Vagina (tissue), 2 donors: ENCODE measurements at regions of chr17 and their contacts with region 1.

Region 1: DNA sequence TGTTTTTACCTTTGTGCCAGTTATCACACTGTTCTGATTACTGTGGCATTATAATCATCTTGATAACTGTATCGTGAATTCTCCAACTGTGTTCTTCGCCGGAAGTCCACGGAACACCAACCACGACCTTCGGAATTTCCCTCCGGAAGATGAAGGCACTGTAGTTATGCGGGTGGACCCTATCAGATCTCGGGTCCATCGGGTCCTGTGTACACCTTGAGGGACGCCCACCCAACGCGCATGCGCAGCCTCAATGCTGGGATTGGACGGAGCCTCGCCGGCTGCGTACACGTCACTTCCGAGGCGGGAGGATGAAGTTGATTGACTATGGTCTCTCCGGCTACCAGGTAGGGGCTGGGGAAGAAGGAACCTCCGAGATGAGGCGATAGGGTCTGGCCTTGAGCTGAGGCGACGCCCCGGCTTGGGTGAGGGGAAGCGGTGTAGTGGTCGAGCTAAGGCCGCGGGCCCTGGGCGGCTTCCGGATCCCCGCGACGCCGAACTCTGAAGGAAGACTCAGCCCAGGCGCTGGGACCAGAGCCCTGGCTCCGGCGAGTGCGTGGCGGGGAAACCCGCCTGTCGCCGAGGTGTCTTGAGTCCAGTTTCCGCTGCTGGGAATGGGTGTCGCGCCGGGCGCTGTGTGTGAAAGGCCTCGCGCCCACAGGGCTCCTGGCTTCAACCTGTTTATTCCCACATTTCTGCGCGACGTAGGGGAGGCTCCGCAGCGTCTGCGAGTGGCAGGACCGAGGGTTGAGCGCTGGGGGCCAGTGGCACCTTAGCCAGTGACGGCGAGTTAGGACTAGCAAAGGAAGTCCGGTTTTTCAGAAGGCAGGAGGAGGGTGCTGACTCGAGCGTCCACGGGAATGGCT is at the start of gene DHRS7B:
- DNase-seq: peak; percentile 96 to 98
- H3K4me3 ChIP-seq: peak within 1 kb of the TSS; percentile 62 to 98
- H3K27ac ChIP-seq: peak within 1 kb of the TSS; percentile 93
- H3K4me1 ChIP-seq: peaks cover 17% of the 10 kb centered on the region
- H3K27me3 ChIP-seq: no peaks in the 10 kb centered on the region
- CTCF ChIP-seq: no peak
- POLR2A ChIP-seq: peak in 1 of 2 donors; percentile 55
- total RNA-seq, gene DHRS7B: 31.7 TPM

Region 2: DNA sequence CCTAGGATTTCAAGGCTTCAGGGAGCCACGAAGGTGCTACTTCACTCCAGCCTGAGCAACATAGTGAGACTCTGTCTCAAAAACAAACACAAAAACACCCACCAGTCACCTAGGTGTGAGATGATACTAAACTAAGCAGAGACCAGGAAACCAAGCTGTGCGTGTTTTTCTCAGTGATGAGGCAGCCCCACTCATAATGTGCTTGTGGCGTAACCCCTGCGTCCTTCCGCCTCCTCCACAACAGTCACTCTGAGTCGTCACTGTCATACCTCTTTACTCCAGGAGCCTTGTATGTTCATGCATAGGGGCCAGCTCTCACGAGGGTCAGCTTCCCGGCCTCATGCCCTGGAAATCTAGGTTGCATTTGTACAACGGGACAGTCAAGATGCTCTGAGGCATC is 1624.4 kb before region 1 on chr17:
- intact Hi-C with region 1: no loop called
- DNase-seq: no peak
- H3K4me3 ChIP-seq: no peak overlapping the region
- H3K27ac ChIP-seq: no peak overlapping the region
- H3K4me1 ChIP-seq: peaks cover 5% of the 10 kb centered on the region
- H3K27me3 ChIP-seq: no peaks in the 10 kb centered on the region
- CTCF ChIP-seq: no peak
- POLR2A ChIP-seq: no peak

Region 3: DNA sequence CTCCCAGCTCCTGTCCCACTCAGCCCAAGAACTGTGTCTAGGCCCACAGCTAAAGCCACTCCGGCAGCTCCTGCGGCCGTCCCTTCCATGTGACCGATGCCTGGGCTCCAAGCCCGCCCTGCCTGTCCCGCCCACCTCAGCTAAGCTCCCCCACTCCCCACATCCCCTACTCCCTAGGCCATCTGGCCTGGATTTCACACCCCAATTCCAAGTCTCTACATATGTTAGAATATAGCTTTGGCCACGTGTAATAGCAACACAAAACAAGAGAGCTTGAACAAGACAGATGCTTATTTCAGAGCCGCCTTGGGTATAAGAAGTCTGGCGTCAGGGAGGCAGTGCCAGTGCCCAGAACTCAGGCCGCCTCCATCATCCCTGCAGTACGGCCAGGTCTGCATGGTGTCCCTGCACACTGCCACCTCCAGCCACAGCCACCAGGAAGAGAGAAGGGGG is 54.1 kb before region 1 on chr17:
- intact Hi-C with region 1: no loop called
- DNase-seq: no peak
- H3K4me3 ChIP-seq: no peak overlapping the region
- H3K27ac ChIP-seq: no peak overlapping the region
- H3K4me1 ChIP-seq: peaks cover 11% of the 10 kb centered on the region
- H3K27me3 ChIP-seq: no peaks in the 10 kb centered on the region
- CTCF ChIP-seq: no peak
- POLR2A ChIP-seq: no peak

Region 4: DNA sequence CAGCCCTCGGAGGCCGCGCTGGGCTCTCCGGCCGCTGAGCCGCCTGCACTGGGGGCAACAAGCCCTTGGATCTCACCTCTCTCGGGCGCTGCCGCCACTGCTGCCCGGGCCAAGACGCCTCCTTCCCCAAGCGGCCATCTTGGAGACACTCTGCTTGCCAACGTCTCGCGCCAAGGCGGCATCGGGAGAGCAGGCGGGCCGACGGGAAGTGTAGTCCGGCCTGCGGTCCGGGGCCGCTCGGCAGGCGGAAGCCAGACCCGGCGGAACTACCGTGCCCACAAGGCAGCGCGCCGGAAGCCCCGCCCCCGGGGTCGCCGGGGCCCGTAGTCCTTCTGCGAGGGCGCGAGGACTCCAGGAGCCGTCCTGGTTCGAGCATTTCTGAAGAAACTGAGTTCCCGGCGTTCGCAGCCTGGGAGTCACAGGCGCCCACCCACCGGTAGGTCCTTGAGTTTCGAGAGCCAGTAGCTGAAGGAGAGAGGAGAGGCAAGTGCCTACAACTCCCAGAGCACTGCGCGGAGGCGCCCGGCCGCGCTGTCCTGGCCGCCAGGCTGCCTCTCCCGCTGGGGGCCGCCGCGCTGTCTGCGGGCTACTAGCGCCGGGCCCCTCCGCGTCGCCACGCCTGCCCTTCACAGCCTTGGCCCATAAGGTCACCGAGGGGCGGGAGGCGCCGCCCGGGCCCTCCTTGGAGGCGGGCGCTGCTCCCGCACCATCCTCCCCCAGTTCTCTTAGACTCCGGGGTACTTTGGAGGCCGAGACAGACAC is 87.3 kb after region 1 on chr17 and contains the start of gene TMEM11:
- intact Hi-C with region 1: loop called (anchors 10 kb)
- DNase-seq: peak in 1 of 2 donors; percentile 95
- H3K4me3 ChIP-seq: peak within 1 kb of the TSS; percentile 77 to 85
- H3K27ac ChIP-seq: peak within 1 kb of the TSS; percentile 85
- H3K4me1 ChIP-seq: peaks cover 57% of the 10 kb centered on the region
- H3K27me3 ChIP-seq: no peaks in the 10 kb centered on the region
- CTCF ChIP-seq: peak in 2 of 3 experiments; percentile 11 to 26
- POLR2A ChIP-seq: peak in 1 of 2 donors; percentile 23
- total RNA-seq, gene TMEM11: 30.2 TPM

Region 5: GRCh38 chr17:21284319-21285163 is 157.7 kb after region 1 on chr17 and contains the start of gene MAP2K3:
- intact Hi-C with region 1: loop called (anchors 10 kb)
- DNase-seq: peak in 1 of 2 donors; percentile 99
- H3K4me3 ChIP-seq: peak within 1 kb of the TSS; percentile 85 to 88
- H3K27ac ChIP-seq: peak within 1 kb of the TSS; percentile 94
- H3K4me1 ChIP-seq: peaks cover 80% of the 10 kb centered on the region
- H3K27me3 ChIP-seq: no peaks in the 10 kb centered on the region
- CTCF ChIP-seq: no peak
- POLR2A ChIP-seq: peak in 1 of 2 donors; percentile 94
- total RNA-seq, gene MAP2K3: 21.6 TPM

Region 6: GRCh38 chr17:21457051-21458026 is 330.5 kb after region 1 on chr17:
- intact Hi-C with region 1: loop called (anchors 10 kb)
- DNase-seq: peak in 1 of 2 donors; percentile 88
- H3K4me3 ChIP-seq: no peak overlapping the region
- H3K27ac ChIP-seq: peak overlapping the region; percentile 48
- H3K4me1 ChIP-seq: peaks cover 25% of the 10 kb centered on the region
- H3K27me3 ChIP-seq: no peaks in the 10 kb centered on the region
- CTCF ChIP-seq: peak; percentile 40 to 76 (median 70)
- POLR2A ChIP-seq: no peak

Region 7: DNA sequence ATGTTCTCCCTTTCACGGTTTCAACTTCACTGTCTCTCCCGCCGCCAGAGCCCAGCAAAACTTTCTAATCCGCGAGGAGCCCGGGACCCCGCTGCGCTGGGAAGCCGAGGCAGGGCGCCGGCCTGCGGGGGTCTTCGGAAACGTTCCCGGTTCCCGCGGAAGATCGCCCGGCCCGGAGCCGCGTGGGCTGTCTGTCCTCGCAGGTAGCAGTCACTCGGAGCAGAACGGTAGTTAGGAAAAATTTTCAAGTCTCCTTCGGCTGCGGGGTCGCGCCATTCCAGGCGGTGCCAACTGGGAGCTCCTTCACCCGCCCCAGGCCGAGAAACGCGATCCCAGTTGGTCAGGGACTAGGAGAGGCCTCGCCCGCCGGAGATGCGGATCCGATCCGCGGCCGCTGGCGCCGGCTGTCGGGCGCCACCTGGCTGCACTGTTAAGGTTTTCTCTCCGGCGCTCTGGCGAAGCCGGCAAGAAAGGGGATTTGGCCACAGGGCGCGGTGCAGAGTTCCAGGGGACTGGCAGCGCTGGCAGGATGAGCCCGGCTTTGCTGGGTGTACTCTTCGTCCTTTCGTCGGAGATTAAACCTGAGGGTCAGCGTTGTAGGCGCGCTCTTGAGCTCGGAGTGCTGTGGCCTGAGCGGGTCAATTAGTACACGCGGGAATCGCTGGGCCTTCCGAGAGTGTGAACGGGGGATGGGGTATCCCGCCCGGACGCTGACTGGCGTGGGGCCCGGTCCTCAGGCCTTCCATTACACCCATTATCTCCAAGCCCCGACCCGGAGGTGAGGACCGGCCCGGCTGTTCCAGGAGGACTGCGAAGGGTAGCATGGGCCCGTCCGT is 384.7 kb after region 1 on chr17:
- intact Hi-C with region 1: loop called (anchors 10 kb)
- DNase-seq: no peak
- H3K4me3 ChIP-seq: peak overlapping the region; percentile 49 to 50
- H3K27ac ChIP-seq: peak overlapping the region; percentile 60
- H3K4me1 ChIP-seq: peaks cover 19% of the 10 kb centered on the region
- H3K27me3 ChIP-seq: no peaks in the 10 kb centered on the region
- CTCF ChIP-seq: peak; percentile 8 to 61 (median 61)
- POLR2A ChIP-seq: no peak